Activated naive CD4-positive, alpha-beta T cell treated with anti-CD3 and anti-CD28 coated beads for 36 hours (primary cell): ENCODE measurements at regions of chr16 and their contacts with region 1.

Region 1: GRCh38 chr16:56964243-56965148 is 2.7 kb downstream of the CETP start:
- DNase-seq: peak; percentile 98
- H3K4me3 Mint-ChIP-seq: no peak overlapping the region
- H3K27ac Mint-ChIP-seq: no peak overlapping the region
- H3K4me1 Mint-ChIP-seq: peaks cover 19% of the 10 kb centered on the region
- H3K27me3 Mint-ChIP-seq: no peaks in the 10 kb centered on the region

Region 2: GRCh38 chr16:56841233-56841632 is 123.3 kb before region 1 on chr16:
- CTCF ChIA-PET with region 1: no interaction called
- intact Hi-C with region 1: no loop called
- DNase-seq: no peak
- H3K4me3 Mint-ChIP-seq: no peak overlapping the region
- H3K27ac Mint-ChIP-seq: no peak overlapping the region
- H3K4me1 Mint-ChIP-seq: peaks cover 5% of the 10 kb centered on the region
- H3K27me3 Mint-ChIP-seq: no peaks in the 10 kb centered on the region

Region 3: DNA sequence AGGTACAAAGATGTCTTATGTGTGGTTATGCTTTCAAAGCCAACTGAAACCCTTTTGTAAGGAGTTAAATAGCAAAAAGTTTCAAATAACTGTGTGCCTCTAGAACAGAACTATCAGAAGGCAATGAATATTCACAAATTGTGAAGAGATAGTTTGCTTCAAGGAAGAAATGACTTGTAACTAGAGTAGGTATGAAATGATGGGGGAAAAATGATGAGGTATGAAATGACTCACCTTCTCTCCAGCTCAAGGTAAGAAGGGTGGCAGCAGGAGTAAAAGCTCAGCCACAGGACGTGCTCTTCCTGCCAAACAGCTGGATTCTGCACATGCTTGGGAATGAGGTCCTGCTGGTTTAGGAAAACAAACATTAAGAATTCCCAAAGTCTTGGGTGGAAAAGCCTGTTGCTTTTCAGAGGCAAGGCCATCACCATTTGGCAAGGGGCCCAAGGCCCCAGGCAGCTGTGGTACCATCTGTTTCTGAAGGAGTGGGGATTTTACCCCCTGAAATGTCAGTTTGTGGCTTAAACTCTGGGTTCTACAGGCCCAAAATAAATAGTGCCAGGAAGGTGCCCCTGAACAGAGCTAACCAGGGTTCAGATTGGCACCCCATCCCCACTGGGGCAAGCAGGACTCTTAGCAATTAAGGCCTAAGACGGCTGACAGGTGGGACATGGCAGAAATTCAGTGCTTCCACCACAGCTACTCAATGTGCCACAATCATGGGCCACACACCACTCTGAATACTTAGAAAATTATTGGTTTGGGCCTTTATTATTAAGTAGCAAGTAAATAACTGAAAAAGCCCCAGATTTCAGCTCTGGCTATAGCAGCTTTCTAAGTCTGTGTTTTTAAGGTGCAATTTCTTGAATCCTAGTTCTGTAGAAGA is 19.3 kb before region 1 on chr16:
- CTCF ChIA-PET with region 1: interaction called, 63 read pairs
- intact Hi-C with region 1: no loop called
- DNase-seq: peak; percentile 65
- H3K4me3 Mint-ChIP-seq: peak overlapping the region; percentile 3
- H3K27ac Mint-ChIP-seq: peak overlapping the region; percentile 96
- H3K4me1 Mint-ChIP-seq: peaks cover 56% of the 10 kb centered on the region
- H3K27me3 Mint-ChIP-seq: no peaks in the 10 kb centered on the region

Region 4: DNA sequence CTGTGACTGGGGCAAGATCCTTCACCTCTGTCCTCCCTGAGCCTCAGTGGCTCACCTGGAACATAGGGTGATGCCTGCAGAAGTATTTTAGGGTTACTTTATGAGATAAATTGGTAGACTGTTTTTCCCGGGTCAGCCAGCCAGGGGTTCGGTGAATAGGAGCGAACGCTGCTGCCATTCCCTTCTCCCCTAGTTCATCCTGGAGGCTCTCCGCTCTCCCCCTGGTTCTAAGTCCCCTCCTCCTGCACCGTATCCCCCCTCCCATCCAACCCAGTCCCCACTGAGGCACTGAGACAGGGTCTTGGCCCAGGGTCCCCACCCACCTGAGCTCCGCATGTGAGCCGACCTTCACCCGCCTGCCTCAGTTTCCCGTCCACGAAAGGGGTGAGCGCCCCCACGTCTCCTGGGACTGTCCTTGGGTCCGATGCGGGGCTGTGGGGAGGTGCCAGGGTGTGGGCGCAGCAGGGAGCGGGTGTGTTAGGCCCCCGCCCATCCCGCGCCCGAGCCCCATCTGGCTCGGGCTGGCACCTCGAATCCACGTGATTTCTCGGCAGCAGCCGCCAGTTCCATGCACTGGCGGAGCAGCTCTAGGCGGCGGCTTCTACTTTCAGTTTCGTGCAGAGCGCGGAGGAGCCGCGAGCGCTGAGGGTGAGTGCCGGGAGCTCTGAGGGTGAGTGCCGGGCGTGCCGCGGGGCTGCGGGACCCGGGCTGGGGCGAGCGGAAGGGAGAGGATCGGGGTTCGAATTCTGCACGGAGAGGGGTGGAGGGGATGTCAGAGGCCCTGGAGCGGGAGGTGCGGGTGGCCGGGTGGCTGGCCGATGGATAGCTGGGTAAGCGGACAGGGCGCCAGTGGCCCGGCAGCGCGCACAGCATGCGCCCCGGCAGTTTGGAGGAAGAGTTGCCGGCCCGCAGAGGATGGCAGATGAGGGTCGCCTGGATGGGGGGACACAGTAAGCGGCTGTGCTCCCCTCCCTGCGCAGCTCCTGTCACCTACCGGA is 24.8 kb after region 1 on chr16 and contains the start of gene NLRC5:
- CTCF ChIA-PET with region 1: interaction called, 39 read pairs
- intact Hi-C with region 1: loop called (anchors 1 kb)
- DNase-seq: peak; percentile 95
- H3K4me3 Mint-ChIP-seq: peak within 1 kb of the TSS; percentile 99
- H3K27ac Mint-ChIP-seq: peak within 1 kb of the TSS; percentile 100
- H3K4me1 Mint-ChIP-seq: peaks cover 73% of the 10 kb centered on the region
- H3K27me3 Mint-ChIP-seq: no peaks in the 10 kb centered on the region
- total RNA-seq, gene NLRC5: 104 to 119 TPM

Region 5: GRCh38 chr16:57023541-57024249 is 59.2 kb after region 1 on chr16:
- CTCF ChIA-PET with region 1: interaction called, 22 read pairs
- intact Hi-C with region 1: no loop called
- DNase-seq: peak; percentile 79
- H3K4me3 Mint-ChIP-seq: no peak overlapping the region
- H3K27ac Mint-ChIP-seq: peak overlapping the region; percentile 74
- H3K4me1 Mint-ChIP-seq: peaks cover 81% of the 10 kb centered on the region
- H3K27me3 Mint-ChIP-seq: no peaks in the 10 kb centered on the region

Region 6: GRCh38 chr16:57066625-57067024 is 102.1 kb after region 1 on chr16:
- CTCF ChIA-PET with region 1: interaction called, 10 read pairs
- intact Hi-C with region 1: no loop called
- DNase-seq: no peak
- H3K4me3 Mint-ChIP-seq: no peak overlapping the region
- H3K27ac Mint-ChIP-seq: no peak overlapping the region
- H3K4me1 Mint-ChIP-seq: peaks cover 12% of the 10 kb centered on the region
- H3K27me3 Mint-ChIP-seq: no peaks in the 10 kb centered on the region